ENCODE measurements at regions of chr4 and their contacts with region 1.

Region 1: GRCh38 chr4:52659001-52659721 is at the start of gene USP46:
- DNase-seq: peak; percentile 84 to 90 (median 87)
- ATAC-seq: peak; percentile 60 to 96 (median 89)
- H3K4me3 ChIP-seq: peak within 1 kb of the TSS; percentile 60 to 98 (median 91)
- H3K27ac ChIP-seq: peak within 1 kb of the TSS; percentile 94 to 100 (median 98)
- H3K4me1 ChIP-seq: peaks cover 0 to 67% (median 40%) of the 10 kb centered on the region in 12 donors
- H3K27me3 ChIP-seq: no peaks in the 10 kb centered on the region
- CTCF ChIP-seq: no peak
- POLR2A ChIP-seq: peak in 1 of 2 donors; percentile 46
- total RNA-seq, gene USP46: 29.8 to 111 (median 75.3) TPM

Region 2: GRCh38 chr4:52588097-52588782 is 70.9 kb before region 1 on chr4:
- intact Hi-C with region 1: loop called in 5 of 10 experiments (anchors 5 to 10 kb)
- DNase-seq: peak in 2 of 5 donors; percentile 40 to 48
- ATAC-seq: peak in 3 of 4 donors; percentile 50 to 52 (median 52)
- H3K4me3 ChIP-seq: no peak overlapping the region
- H3K27ac ChIP-seq: peak overlapping the region in 10 of 12 donors; percentile 33 to 93 (median 60)
- H3K4me1 ChIP-seq: peaks cover 0 to 47% (median 19%) of the 10 kb centered on the region in 12 donors
- H3K27me3 ChIP-seq: no peaks in the 10 kb centered on the region
- CTCF ChIP-seq: peak; percentile 33 to 63 (median 54)
- POLR2A ChIP-seq: no peak

Region 3: GRCh38 chr4:52595001-52595400 is 64.2 kb before region 1 on chr4:
- intact Hi-C with region 1: loop called in 3 of 10 experiments (anchors 10 kb)
- DNase-seq: no peak
- ATAC-seq: no peak
- H3K4me3 ChIP-seq: no peak overlapping the region
- H3K27ac ChIP-seq: no peak overlapping the region
- H3K4me1 ChIP-seq: peaks cover 0 to 15% (median 0%) of the 10 kb centered on the region in 12 donors
- H3K27me3 ChIP-seq: no peaks in the 10 kb centered on the region
- CTCF ChIP-seq: no peak
- POLR2A ChIP-seq: no peak

Region 4: DNA sequence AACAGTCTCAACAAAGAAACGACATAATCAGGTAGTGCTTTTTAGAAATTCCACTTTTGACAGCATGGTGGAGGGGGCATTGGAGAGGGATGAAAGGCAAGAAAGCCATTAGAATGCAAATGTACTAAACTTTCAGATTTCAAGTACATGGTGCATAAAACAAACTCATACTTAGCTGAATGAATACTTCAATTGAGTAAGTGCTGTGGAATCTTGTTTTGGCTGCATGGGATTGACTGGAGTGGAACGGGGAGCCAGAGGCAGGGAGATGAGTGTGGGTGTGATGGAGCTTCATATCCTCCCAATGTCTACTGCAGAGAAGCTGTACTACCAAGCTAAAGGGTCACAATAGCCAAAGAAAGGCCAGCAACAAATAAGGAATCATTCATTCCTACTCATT is 52.4 kb before region 1 on chr4:
- intact Hi-C with region 1: loop called in 2 of 10 experiments (anchors 10 kb)
- DNase-seq: no peak
- ATAC-seq: peak in 1 of 4 donors; percentile 43
- H3K4me3 ChIP-seq: no peak overlapping the region
- H3K27ac ChIP-seq: no peak overlapping the region
- H3K4me1 ChIP-seq: peaks cover 0 to 26% (median 0%) of the 10 kb centered on the region in 12 donors
- H3K27me3 ChIP-seq: no peaks in the 10 kb centered on the region
- CTCF ChIP-seq: no peak
- POLR2A ChIP-seq: no peak

Region 5: DNA sequence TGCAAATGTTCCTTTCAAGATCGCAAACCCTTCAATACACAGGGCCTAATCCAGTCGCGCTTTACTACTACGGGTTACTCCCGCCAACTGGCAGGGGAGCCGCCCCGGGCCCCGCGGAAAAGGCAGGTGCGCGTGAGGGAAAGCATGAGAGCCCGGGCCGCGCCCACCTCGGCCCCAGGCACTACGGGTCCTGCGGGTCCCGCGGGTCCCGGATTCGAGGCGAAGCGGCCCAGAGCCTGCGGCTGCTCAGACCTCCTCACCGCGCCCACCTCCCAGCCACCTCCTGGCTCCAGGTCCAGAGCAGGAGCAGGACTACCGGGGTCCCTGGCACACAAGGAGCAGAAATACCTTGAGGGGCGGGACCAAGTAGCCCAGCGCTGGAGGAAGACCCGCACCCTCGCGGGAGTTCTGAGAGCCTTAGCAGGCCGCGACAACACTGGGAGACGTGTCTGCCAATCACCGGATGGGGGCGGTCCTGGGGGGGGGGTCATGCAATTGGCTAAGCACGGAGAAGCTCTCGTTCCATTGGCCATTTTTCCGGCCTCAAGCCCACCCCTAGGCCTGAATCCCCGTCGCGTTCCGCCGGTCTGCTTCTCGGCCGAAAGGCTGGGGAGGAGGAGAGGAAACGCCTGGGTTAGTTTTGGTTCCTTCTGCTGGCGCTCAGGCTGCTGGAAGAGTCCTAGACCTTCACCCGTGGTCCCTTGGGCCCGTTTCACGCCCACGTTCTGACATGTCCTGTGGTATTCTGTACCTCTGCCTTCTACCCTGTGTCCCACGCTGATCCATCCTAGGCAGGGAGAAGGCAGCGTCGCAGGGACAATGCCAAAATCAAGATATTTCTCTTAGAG is 63.0 kb after region 1 on chr4:
- intact Hi-C with region 1: loop called in 3 of 10 experiments (anchors 2 to 10 kb)
- DNase-seq: peak; percentile 95 to 97 (median 95)
- ATAC-seq: peak; percentile 98 to 99 (median 98)
- H3K4me3 ChIP-seq: peak overlapping the region; percentile 62 to 96 (median 78)
- H3K27ac ChIP-seq: peak overlapping the region; percentile 80 to 97 (median 92)
- H3K4me1 ChIP-seq: peaks cover 0 to 16% (median 2%) of the 10 kb centered on the region in 12 donors
- H3K27me3 ChIP-seq: no peaks in the 10 kb centered on the region
- CTCF ChIP-seq: peak in 3 of 12 donors; percentile 9 to 32 (median 13)
- POLR2A ChIP-seq: peak in 1 of 2 donors; percentile 80

Region 6: DNA sequence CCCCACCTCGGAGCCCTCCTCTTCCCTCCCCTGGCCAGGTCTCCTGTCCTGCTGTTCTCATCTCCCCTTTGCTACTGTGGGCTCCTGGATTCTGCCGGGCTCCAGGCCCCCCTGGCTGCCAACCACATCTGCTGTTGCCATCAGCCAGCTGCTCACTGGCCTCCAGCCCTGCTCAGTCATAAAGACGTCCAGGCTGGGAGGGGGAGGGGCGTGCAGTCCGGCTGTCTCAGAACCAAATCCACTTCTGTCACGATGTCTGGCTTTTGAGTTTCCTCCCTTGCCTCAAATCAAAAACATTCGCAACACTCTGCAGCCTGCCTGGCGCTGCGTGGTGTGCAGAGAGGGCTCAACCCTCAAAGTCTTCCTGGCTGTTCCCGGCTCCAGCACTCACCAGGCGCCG is 210.0 kb after region 1 on chr4:
- intact Hi-C with region 1: loop called in 2 of 10 experiments (anchors 5 kb)
- DNase-seq: peak; percentile 74 to 86 (median 81)
- ATAC-seq: peak; percentile 34 to 69 (median 55)
- H3K4me3 ChIP-seq: peak overlapping the region in 1 of 12 donors; percentile 6
- H3K27ac ChIP-seq: peak overlapping the region in 10 of 12 donors; percentile 34 to 81 (median 58)
- H3K4me1 ChIP-seq: peaks cover 0 to 76% (median 47%) of the 10 kb centered on the region in 12 donors
- H3K27me3 ChIP-seq: no peaks in the 10 kb centered on the region
- CTCF ChIP-seq: no peak
- POLR2A ChIP-seq: no peak

Region 7: DNA sequence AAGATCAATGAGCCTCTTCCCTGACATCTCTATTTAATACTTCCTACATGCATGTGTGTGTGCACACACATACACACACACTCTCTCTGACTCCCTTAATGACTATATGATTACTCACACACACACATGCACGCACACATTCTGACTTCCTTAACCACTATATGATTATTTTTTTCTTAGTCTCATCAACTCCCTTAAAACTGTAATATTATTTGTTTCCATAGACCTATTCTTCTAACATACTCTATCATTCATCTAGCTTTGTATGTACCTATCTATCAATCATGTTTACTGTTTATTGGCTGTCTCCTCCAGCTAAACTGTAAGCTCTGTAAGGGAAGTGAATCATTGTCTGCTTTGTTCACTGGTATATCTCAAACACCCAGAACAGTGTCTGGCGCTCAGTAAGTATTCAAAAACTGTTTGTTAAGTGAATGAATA is 439.5 kb after region 1 on chr4:
- intact Hi-C with region 1: no loop called
- DNase-seq: no peak
- ATAC-seq: no peak
- H3K4me3 ChIP-seq: no peak overlapping the region
- H3K27ac ChIP-seq: no peak overlapping the region
- H3K4me1 ChIP-seq: peaks cover 0 to 19% (median 7%) of the 10 kb centered on the region in 12 donors
- H3K27me3 ChIP-seq: no peaks in the 10 kb centered on the region
- CTCF ChIP-seq: no peak
- POLR2A ChIP-seq: no peak

Measured in heart left ventricle (tissue), 16 donors.